ENCODE measurements at regions of chr9 and their contacts with region 1.

Region 1: DNA sequence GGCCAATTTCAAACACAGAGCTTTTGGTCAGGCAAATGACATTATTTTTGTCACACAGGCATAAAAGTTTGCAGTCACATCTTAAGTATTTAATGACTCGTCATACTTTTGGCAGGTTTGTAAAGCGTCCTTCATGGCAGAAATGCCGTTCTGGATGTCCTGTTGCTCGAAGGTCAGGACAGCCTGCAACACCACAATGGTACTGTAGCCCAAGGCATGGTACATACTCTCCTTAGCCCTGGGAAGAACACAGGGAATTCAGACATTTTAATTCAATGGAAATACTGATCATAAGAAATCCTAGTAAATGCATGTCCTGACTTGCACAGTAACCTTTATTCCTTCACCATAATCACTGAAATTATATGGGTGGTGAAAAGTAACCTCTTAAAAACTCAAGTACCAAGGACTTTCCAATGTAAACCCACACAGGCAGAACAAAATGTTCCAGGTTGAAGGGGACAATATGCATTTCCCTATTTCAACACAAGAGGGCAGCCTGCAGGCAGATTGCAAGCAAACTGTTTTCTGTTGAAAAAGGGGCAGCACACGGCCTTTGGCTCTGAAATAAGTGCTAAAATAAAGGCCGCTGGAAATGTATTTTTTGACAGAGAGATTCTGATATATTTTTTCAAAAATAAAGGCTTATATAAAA is 95.7 kb downstream of the TTC39B start:
- DNase-seq: peak; percentile 72
- H3K4me3 ChIP-seq: no peak overlapping the region
- H3K27ac ChIP-seq: peak overlapping the region in 1 of 2 donors; percentile 29
- H3K4me1 ChIP-seq: no peaks in the 10 kb centered on the region
- H3K27me3 ChIP-seq: no peaks in the 10 kb centered on the region
- CTCF ChIP-seq: peak; percentile 56 to 81 (median 76)
- POLR2A ChIP-seq: no peak

Region 2: DNA sequence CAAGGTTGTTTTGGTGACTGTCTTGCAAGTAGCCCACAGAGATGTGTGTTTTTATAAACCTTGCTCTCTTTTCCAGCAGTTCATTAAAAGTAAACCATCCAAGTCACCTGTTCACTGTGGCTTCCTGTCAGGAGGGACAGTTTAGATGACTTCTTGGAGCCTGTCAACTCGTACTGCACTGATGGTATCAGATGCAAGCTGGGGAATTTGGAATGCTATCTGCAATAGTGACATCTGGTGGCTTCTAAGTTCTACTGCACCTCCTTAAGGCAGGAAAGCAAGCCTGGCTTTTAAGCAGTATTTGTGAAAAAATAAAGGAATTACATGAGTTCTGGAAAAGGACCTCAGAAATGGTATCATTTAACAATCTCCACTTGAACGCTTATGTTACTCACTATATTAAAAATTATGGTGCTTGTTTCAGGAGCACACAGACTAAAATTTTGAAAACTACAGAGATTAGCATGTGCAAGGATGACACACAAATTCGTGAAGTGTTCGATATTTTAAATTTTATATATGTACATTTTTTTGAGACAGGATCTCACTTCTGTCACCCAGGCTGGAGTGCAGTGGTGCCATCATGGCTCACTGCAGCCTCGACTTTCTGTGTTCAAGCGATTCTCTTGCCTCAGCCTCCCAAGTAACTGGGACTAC is 68.3 kb before region 1 on chr9:
- intact Hi-C with region 1: no loop called
- DNase-seq: no peak
- H3K4me3 ChIP-seq: no peak overlapping the region
- H3K27ac ChIP-seq: no peak overlapping the region
- H3K4me1 ChIP-seq: no peaks in the 10 kb centered on the region
- H3K27me3 ChIP-seq: no peaks in the 10 kb centered on the region
- CTCF ChIP-seq: peak; percentile 32 to 61 (median 50)
- POLR2A ChIP-seq: no peak

Region 3: DNA sequence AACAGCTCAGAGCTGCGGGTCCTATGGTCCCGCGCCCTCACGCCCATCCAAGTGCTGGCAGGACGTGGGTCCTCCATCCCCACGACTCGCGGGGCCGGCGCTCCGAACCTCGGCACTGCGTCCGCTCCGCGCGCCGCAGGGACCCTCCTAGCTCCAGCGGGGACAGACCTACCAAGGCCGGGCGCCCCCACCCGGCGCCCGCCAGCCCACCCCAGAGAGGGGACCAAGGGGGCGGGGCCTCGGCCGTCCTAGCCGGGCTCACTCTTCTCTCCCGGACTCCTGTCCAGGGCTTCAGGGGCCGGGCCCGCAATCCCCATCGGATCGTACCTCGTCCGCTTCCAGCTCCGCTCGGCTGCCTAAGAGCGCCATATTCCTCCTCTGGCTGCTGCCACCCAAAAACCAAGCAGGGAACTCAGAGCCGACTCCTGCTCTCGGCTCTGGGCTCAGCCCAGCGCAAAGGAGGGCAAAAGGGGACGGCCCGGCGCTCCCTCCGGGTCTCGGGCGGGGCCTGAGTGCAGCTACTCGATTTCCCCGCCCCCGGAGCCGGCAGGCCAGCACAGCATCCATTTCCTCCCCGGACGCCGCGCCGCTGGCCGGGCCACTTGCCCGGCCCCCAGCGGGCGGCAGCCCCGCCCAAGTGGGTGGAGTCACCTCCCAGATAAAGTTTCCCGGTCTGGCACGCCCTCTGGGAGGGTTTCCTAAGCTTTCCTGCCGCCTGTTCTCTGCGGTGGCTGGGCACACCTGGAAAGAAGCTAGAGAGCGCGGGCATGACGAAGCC is 95.7 kb after region 1 on chr9 and contains the start of gene TTC39B:
- intact Hi-C with region 1: loop called (anchors 5 kb)
- DNase-seq: peak; percentile 92
- H3K4me3 ChIP-seq: peak within 1 kb of the TSS; percentile 79 to 83
- H3K27ac ChIP-seq: peak within 1 kb of the TSS; percentile 79 to 91
- H3K4me1 ChIP-seq: no peaks in the 10 kb centered on the region
- H3K27me3 ChIP-seq: no peaks in the 10 kb centered on the region
- CTCF ChIP-seq: peak in 3 of 4 experiments; percentile 24 to 31 (median 25)
- POLR2A ChIP-seq: peak; percentile 77
- total RNA-seq, gene TTC39B: 4.2 to 4.3 TPM

Region 4: GRCh38 chr9:15416880-15417279 is 205.6 kb after region 1 on chr9:
- intact Hi-C with region 1: loop called (anchors 10 kb)
- DNase-seq: no peak
- H3K4me3 ChIP-seq: no peak overlapping the region
- H3K27ac ChIP-seq: no peak overlapping the region
- H3K4me1 ChIP-seq: no peaks in the 10 kb centered on the region
- H3K27me3 ChIP-seq: no peaks in the 10 kb centered on the region
- CTCF ChIP-seq: peak in 2 of 4 experiments; percentile 36
- POLR2A ChIP-seq: no peak

Region 5: GRCh38 chr9:15606643-15607472 is 395.6 kb after region 1 on chr9:
- intact Hi-C with region 1: loop called (anchors 10 kb)
- DNase-seq: peak; percentile 25
- H3K4me3 ChIP-seq: no peak overlapping the region
- H3K27ac ChIP-seq: no peak overlapping the region
- H3K4me1 ChIP-seq: no peaks in the 10 kb centered on the region
- H3K27me3 ChIP-seq: no peaks in the 10 kb centered on the region
- CTCF ChIP-seq: peak; percentile 73 to 84 (median 76)
- POLR2A ChIP-seq: no peak